ENCODE measurements at regions of chr1 and their contacts with region 1.

Region 1: GRCh38 chr1:77652268-77652667 is 30.2 kb downstream of the ZZZ3 start:
- DNase-seq: no peak
- H3K4me3 ChIP-seq: no peak overlapping the region
- H3K27ac ChIP-seq: no peak overlapping the region
- H3K4me1 ChIP-seq: peaks cover 8% of the 10 kb centered on the region
- H3K27me3 ChIP-seq: no peaks in the 10 kb centered on the region
- CTCF ChIP-seq: no peak
- POLR2A ChIP-seq: no peak

Region 2: DNA sequence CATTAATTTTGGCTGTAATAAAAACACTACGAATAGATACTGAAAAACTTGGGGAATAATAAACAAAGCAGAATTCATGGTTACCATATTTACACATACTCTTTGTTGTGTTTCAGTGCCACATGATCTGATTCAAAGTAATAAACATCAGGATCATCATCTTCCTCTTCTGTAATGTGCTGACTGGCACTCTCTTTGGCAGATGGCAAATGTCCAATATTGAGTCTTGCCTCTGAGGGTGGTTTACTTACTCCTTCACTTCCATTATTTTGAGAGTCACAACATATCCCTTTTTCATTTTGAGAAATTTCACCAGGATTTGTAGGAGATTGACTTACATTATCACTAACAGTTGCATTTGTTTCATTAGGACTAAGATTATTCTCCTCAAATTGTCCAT is 20.5 kb before region 1 on chr1:
- intact Hi-C with region 1: loop called (anchors 2 kb)
- DNase-seq: no peak
- H3K4me3 ChIP-seq: no peak overlapping the region
- H3K27ac ChIP-seq: no peak overlapping the region
- H3K4me1 ChIP-seq: no peaks in the 10 kb centered on the region
- H3K27me3 ChIP-seq: no peaks in the 10 kb centered on the region
- CTCF ChIP-seq: no peak
- POLR2A ChIP-seq: no peak

Region 3: DNA sequence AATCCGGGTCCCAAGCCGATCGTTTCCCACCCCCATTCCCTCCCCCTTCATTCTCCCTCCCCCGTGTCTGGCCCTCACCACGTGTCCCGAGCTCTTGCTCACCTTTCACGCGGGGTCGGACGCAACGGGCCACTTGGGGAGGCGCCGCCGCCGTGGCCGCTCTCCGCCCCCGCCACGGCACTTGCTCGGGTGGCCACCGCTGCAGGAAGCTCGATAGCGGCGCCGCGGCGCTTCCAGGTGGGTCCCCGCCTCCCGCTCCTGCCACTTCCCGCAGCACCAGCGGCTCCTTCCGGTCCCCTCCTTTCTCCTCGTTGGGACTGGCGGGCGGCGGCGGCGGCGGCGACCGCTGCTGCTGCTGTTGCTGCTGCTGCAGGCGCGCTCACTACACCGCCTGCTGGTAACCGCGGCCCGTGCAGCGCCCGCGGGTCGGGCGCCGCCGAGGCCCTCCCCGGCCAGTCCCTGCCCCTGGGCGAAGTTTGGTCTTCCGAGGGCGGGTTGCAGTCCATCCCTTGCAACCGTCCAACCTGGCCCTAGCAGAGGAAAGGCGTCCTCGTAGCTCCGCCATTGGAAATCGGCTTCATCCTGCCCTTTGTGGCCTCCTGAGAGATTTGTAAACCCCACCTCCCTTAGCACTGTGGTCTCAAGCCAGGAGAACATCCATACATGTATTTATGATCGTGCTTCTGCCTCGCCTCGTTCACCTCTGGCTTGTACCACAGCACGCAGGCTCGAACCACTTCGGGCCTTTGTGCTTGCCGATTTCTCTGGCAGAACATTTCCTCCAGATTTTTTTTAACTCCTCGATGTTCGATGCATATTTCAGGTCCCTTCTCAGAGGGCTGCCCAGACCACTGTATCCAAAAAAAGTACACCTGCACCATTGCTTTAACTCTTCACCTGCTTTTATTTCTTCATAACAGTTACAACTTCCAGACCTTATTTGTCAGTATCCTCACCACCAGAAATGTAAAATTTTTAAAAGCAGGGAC is 31.2 kb after region 1 on chr1:
- intact Hi-C with region 1: no loop called
- DNase-seq: peak in 1 of 2 donors; percentile 95
- H3K4me3 ChIP-seq: peak overlapping the region; percentile 76 to 93
- H3K27ac ChIP-seq: peak overlapping the region; percentile 95
- H3K4me1 ChIP-seq: peaks cover 48% of the 10 kb centered on the region
- H3K27me3 ChIP-seq: no peaks in the 10 kb centered on the region
- CTCF ChIP-seq: peak; percentile 76 to 93 (median 82)
- POLR2A ChIP-seq: no peak

Region 4: GRCh38 chr1:77704736-77705135 is 52.5 kb after region 1 on chr1:
- intact Hi-C with region 1: no loop called
- DNase-seq: no peak
- H3K4me3 ChIP-seq: no peak overlapping the region
- H3K27ac ChIP-seq: no peak overlapping the region
- H3K4me1 ChIP-seq: no peaks in the 10 kb centered on the region
- H3K27me3 ChIP-seq: no peaks in the 10 kb centered on the region
- CTCF ChIP-seq: no peak
- POLR2A ChIP-seq: no peak